IMR-90 (cell line): ENCODE measurements at regions of chr16 and their contacts with region 1.

Region 1: GRCh38 chr16:51151961-51152663 is 1.0 kb upstream of the SALL1 start:
- DNase-seq: peak; percentile 80
- ATAC-seq: peak; percentile 86
- H3K4me3 ChIP-seq: peak overlapping the region; percentile 89
- H3K27ac ChIP-seq: peak overlapping the region; percentile 94
- H3K4me1 ChIP-seq: peaks cover 7% of the 10 kb centered on the region
- H3K27me3 ChIP-seq: peaks cover 3% of the 10 kb centered on the region; the same call in 1 of the 2 replicates
- CTCF ChIP-seq: no peak
- POLR2A ChIP-seq: no peak; the same call in 1 of the 2 replicates
- RAD21 ChIP-seq: no peak

Region 2: DNA sequence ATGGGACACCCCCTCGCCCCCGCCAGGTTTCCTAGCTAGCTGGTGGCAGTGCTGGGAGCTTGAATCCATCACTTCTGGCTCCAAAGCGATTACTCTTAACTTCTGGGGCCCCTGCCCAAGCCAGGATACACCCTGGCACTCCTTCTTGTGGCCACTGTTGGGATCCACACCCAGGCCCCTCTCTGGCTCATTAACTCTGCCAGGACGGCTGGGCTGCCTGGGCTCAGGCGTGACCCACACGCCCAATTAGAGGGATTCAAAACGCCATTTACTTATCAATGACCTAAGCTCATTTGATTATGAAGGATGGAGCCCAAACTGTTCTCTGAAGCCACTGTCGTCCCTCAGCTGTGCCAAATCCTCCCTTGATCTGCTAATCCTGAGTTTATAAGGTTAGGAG is 703.6 kb before region 1 on chr16:
- CTCF ChIA-PET with region 1: no interaction called
- POLR2A ChIA-PET with region 1: no interaction called
- dilution Hi-C with region 1: no loop called
- in situ Hi-C with region 1: no loop called
- intact Hi-C with region 1: no loop called
- DNase-seq: no peak
- ATAC-seq: no peak
- H3K4me3 ChIP-seq: no peak overlapping the region
- H3K27ac ChIP-seq: no peak overlapping the region
- H3K4me1 ChIP-seq: no peaks in the 10 kb centered on the region
- H3K27me3 ChIP-seq: peaks cover 4% of the 10 kb centered on the region; the same call in 1 of the 2 replicates
- CTCF ChIP-seq: no peak
- POLR2A ChIP-seq: no peak
- RAD21 ChIP-seq: no peak

Region 3: GRCh38 chr16:51326131-51326856 is 174.2 kb after region 1 on chr16:
- CTCF ChIA-PET with region 1: no interaction called
- POLR2A ChIA-PET with region 1: no interaction called
- dilution Hi-C with region 1: no loop called
- in situ Hi-C with region 1: no loop called
- intact Hi-C with region 1: loop called (anchors 10 kb)
- DNase-seq: peak; percentile 87
- ATAC-seq: peak; percentile 87
- H3K4me3 ChIP-seq: no peak overlapping the region
- H3K27ac ChIP-seq: no peak overlapping the region
- H3K4me1 ChIP-seq: peaks cover 4% of the 10 kb centered on the region
- H3K27me3 ChIP-seq: no peaks in the 10 kb centered on the region; the same call in 1 of the 2 replicates
- CTCF ChIP-seq: no peak
- POLR2A ChIP-seq: no peak
- RAD21 ChIP-seq: no peak

Region 4: DNA sequence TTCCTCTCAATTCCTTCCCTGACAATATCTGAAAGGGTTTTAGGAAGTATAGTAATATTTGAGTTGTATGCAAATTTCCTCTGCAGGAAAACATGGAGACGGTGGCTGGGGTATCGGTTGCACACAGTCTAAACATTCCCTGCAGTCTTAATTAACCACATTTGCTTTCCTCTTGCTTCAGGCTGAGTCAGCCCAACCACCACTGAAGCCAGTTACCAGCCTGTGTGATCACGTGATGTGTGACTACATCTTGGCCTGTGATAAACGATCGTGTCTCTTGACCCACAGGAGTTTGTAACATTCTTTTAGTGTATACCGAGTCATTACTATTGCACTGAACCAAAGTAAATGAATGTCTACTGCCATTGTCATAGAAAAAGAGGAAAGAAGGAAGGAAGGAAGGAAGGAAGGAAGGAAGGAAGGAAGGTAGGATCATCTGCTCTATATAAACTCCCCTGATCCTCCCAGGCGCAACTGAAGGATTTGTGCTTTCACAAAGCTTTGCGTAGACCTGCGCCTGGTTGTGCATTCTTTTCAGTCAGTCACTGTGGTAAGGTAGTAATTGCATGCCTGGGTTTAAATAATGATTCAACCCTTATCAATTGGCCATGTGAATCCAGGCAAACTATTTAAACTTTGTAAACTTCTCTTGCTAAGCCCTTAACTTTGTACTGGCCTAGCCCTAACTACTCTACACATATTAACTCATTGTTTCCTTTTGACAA is 279.6 kb after region 1 on chr16:
- CTCF ChIA-PET with region 1: no interaction called
- POLR2A ChIA-PET with region 1: no interaction called
- dilution Hi-C with region 1: no loop called
- in situ Hi-C with region 1: no loop called
- intact Hi-C with region 1: loop called (anchors 2 kb)
- DNase-seq: peak; percentile 99
- ATAC-seq: peak; percentile 98
- H3K4me3 ChIP-seq: no peak overlapping the region
- H3K27ac ChIP-seq: peak overlapping the region; percentile 29; the same call in 1 of the 2 replicates
- H3K4me1 ChIP-seq: peaks cover 5% of the 10 kb centered on the region; the same call in 1 of the 2 replicates
- H3K27me3 ChIP-seq: no peaks in the 10 kb centered on the region
- CTCF ChIP-seq: no peak
- POLR2A ChIP-seq: no peak
- RAD21 ChIP-seq: peak; percentile 0; the same call in 1 of the 2 replicates

Region 5: DNA sequence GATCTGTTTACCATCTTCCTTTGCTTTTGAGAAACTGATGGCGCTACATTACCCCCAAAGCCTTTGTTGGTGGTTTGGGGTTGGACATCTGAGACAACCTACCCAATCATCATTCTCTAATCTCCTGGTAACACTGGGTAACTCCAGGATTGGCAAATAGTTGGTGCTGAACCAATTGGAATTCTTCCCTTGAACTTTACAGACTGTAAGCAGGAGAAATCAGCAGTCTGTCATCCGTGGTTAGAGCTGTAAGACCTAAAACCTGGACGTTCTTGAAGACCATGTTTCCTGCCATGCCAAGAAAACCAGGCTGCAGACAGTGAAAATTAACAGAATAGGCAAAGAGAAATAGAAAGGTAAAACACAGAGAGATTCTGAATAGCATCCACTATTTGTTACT is 397.7 kb after region 1 on chr16:
- CTCF ChIA-PET with region 1: no interaction called
- POLR2A ChIA-PET with region 1: no interaction called
- dilution Hi-C with region 1: no loop called
- in situ Hi-C with region 1: no loop called
- intact Hi-C with region 1: loop called (anchors 5 kb)
- DNase-seq: peak; percentile 62
- ATAC-seq: peak; percentile 48; the same call in 1 of the 2 replicates
- H3K4me3 ChIP-seq: no peak overlapping the region
- H3K27ac ChIP-seq: no peak overlapping the region
- H3K4me1 ChIP-seq: peaks cover 10% of the 10 kb centered on the region
- H3K27me3 ChIP-seq: no peaks in the 10 kb centered on the region
- CTCF ChIP-seq: no peak
- POLR2A ChIP-seq: no peak
- RAD21 ChIP-seq: no peak

Region 6: DNA sequence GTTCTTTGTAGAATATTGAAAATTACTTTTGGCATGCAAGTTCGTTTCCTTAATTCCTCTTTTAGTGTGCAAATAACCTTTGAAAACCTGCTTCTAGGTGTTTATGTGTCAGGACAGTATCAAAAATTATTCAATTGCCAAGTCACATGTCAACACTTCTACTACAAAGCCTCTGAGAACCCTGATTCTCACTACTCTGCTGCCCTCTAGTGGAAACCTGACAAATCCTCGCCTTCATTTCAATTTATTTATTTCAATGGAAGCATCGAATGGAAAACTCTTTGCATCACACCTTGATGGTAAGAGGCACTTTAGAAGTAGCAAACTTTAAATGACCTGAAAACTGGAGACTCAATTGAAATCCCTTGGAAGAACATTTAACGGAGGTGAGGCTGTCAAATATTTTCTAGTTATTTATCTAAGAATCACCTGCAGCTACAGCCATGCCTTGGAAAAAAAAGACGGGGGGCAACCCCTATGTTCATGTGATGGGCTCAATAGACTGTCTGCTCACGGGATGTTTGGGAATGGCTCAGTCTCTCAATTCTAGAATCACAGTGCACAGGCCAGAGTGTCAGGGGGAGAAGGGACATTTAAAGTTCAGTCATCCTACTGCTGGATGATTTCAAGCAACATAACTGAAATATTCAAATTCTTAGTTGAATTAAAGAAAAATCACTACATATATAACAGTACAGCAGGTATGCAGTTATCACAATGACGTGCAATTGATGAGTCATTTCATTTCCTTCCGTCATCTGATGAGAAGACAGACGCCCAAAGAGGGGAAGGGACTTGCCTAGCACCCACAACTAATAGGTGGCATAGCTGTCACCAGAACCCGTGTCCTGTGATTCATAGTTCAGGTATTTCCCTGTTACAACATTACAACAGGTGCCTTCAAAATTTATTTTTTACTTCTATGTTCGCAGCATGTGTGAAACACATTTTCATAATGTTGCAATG is 830.9 kb after region 1 on chr16:
- CTCF ChIA-PET with region 1: no interaction called
- POLR2A ChIA-PET with region 1: no interaction called
- dilution Hi-C with region 1: no loop called
- in situ Hi-C with region 1: no loop called
- intact Hi-C with region 1: loop called (anchors 1 kb)
- DNase-seq: peak; percentile 78
- ATAC-seq: peak; percentile 72
- H3K4me3 ChIP-seq: no peak overlapping the region
- H3K27ac ChIP-seq: no peak overlapping the region
- H3K4me1 ChIP-seq: no peaks in the 10 kb centered on the region; the same call in 1 of the 2 replicates
- H3K27me3 ChIP-seq: no peaks in the 10 kb centered on the region
- CTCF ChIP-seq: peak; percentile 90
- POLR2A ChIP-seq: no peak
- RAD21 ChIP-seq: peak; percentile 96